Right ventricle myocardium inferior (tissue), 1 donor: ENCODE measurements at regions of chr9 and their contacts with region 1.

Region 1: GRCh38 chr9:19174127-19174912 is 47.0 kb upstream of the PLIN2 start:
- DNase-seq: peak; percentile 81
- ATAC-seq: peak; percentile 91

Region 2: GRCh38 chr9:19048966-19049916 is 125.1 kb before region 1 on chr9 and contains the start of gene RRAGA:
- intact Hi-C with region 1: loop called (anchors 5 kb)
- DNase-seq: peak; percentile 97
- ATAC-seq: peak; percentile 97
- total RNA-seq, gene RRAGA: 76.9 TPM

Region 3: DNA sequence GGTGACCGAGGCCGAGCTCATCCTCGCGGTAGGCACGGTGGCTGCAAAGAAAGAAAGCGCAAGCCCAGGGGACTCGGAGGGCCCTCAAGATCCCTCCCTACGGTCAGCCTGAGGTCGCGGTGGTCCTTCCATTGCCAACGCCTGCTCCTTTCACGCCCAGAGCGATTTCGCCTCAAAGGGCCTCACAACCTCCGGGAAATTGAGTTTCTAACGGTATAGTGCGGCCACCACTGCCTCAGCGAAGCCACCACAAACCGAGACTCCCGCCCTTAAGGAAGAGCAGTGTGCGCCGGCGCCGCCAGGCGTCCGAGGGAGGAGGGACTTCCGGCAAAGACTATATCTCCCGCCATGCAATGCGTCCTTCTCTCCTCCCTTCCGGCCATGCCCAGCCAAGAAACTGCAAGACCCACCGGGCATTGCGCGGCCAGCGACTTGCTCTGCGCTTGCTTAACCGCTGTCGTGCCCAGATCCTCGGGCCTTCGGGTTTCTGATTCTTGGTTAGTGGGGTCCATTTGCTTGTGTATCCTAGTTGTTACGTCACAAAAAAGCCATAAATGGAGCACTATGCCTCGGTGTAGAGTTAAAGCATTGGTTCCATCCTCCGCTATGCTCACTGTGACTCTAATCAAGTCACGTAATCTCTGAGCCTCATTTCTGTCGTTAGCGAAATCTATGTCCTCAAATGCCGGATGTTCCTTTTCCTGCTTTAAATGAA is 71.5 kb before region 1 on chr9 and contains the start of gene HAUS6:
- intact Hi-C with region 1: loop called (anchors 2 kb)
- DNase-seq: peak; percentile 97
- ATAC-seq: peak; percentile 99
- total RNA-seq, gene HAUS6: 6.0 TPM

Region 4: DNA sequence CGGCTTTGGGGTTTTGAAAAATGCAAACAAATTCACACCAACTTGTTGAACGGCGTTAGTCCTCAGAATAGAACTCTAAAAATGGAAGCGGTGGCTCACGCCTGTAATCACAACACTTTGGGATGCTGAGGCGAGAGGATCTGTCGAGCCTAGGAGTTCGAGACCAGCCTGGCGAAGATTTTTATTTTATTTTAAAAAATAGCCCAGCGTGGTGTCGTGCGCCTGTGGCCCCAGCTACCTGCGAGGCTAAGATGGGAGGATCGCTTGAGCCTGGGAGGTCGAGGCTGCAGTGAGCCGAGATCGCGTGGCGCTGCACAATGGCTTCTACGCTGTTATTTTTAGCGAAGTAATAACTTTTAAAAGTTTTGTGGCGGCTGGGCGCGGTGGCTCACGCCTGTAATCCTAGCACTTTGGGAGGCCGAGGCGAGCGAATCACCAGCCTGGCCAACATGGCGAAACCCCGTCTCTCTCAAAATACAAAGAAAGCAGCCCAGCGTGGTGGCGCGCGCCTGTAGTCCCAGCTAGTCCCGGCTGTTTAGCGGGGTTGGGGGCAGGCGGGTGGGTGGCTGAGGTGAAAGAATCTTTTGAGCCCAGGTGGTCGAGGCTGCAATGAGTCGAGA is 46.3 kb before region 1 on chr9:
- intact Hi-C with region 1: loop called (anchors 2 kb)
- DNase-seq: peak; percentile 77
- ATAC-seq: peak; percentile 11

Region 5: GRCh38 chr9:19286634-19287200 is 112.4 kb after region 1 on chr9:
- intact Hi-C with region 1: no loop called
- DNase-seq: no peak
- ATAC-seq: no peak

Region 6: GRCh38 chr9:19445438-19445837 is 271.1 kb after region 1 on chr9:
- intact Hi-C with region 1: no loop called
- DNase-seq: no peak
- ATAC-seq: no peak

Region 7: DNA sequence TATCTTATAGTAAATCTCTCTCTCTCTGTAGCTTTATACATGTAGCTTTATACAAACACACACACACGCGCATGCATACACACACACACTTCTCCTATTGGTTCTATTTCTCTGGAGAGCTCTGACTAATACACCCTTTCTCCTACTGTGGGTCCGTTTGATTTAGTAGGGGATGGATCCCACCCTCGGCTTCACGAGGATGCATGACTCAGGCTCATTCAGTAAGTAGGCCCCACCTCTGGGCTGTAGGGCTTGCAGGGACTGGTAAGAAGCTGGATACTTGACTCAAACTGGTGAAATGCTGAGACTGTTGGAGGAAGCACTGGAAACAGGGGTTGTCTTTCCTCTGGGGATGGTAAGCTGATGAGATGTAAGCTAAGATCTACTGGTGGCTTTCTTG is 515.8 kb after region 1 on chr9:
- intact Hi-C with region 1: no loop called
- DNase-seq: no peak
- ATAC-seq: no peak